ENCODE measurements at regions of chr1 and their contacts with region 1.

Region 1: DNA sequence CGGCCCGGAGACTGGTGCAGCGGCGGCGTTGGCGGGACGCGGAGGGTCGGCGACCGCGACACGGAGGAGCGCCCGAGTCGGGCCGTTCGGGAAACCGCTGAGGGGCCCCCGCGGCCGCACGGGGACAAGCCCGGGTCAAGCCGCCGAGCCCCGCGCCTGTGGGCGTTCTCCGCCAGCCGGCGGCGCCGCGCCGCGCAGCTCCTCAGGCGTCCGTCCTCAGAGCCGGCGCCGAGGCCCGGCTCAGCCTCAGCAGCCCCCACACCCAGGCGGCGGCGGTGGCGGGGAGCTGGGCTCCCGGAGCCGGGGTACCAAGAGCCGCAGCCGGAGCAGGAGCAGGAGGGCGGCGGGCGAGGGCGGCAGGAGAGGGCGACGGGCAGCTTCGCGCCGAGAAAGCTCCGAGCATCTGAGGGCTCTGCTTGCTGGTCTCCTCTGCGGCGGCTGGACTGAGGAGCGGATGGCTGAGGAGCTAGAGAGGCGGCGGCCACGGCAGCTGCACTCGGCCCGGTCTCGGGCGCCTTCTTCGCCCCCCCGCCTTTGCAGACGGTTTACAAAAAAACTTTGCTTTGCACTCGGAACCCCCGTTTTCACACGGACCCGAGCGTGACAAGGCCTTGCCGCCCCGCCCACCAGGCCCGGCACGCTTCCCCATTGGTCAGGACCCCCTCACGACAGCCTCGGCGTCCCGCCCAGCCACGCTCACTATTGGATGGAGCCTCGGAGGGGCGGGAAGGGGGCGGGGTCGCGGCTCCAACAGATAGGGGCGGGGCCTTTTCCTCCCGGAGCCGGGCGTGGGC is at the start of gene SLC30A1:
- DNase-seq: peak; percentile 100
- H3K4me3 Mint-ChIP-seq: peak within 1 kb of the TSS; percentile 90
- H3K27ac Mint-ChIP-seq: peak within 1 kb of the TSS; percentile 80
- H3K4me1 Mint-ChIP-seq: peaks cover 57% of the 10 kb centered on the region
- H3K27me3 Mint-ChIP-seq: peaks cover 5% of the 10 kb centered on the region
- total RNA-seq, gene SLC30A1: 8.0 to 8.2 TPM

Region 2: DNA sequence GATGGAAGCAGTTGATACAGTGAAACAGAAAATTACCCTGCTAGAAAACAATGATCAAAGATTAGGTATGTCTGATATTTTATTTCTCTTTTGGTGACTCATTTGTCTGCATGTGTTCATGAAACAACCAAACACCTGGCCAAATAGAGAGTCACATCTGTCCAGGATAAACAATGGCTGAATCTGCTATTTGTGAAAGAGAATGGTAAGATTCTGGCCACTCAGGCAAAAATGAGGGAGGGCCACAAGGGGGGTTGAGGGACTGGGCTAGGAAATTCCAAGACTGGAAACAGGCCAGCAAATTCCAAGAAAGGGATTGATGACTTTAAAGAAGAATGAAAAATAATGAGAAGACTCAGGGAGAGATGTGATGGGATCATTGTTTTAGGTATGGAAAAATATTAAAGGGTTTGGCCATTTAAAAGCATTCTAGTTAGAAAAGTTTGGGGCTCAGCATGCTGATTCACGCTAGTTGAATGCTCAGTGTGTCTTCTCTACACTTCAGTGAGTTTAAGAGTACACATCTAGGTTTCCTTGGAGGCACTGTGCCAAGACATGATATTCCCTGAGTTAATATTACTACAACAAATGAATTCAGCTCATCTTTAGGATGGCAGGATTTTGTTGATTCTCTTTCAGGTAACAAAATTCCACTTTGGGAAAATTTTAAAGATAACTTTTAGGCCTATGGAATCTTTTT is 207.3 kb before region 1 on chr1:
- CTCF ChIA-PET with region 1: no interaction called
- POLR2A ChIA-PET with region 1: no interaction called
- DNase-seq: no peak
- H3K4me3 Mint-ChIP-seq: no peak overlapping the region
- H3K27ac Mint-ChIP-seq: no peak overlapping the region
- H3K4me1 Mint-ChIP-seq: peaks cover 12% of the 10 kb centered on the region
- H3K27me3 Mint-ChIP-seq: no peaks in the 10 kb centered on the region

Region 3: GRCh38 chr1:211613093-211613947 is 34.5 kb after region 1 on chr1:
- CTCF ChIA-PET with region 1: no interaction called
- POLR2A ChIA-PET with region 1: no interaction called
- DNase-seq: no peak
- H3K4me3 Mint-ChIP-seq: no peak overlapping the region
- H3K27ac Mint-ChIP-seq: no peak overlapping the region
- H3K4me1 Mint-ChIP-seq: peaks cover 8% of the 10 kb centered on the region
- H3K27me3 Mint-ChIP-seq: no peaks in the 10 kb centered on the region

Region 4: GRCh38 chr1:211648980-211649934 is 70.4 kb after region 1 on chr1:
- CTCF ChIA-PET with region 1: interaction called, 17 read pairs
- POLR2A ChIA-PET with region 1: interaction called, 6 read pairs
- DNase-seq: peak; percentile 34
- H3K4me3 Mint-ChIP-seq: no peak overlapping the region
- H3K27ac Mint-ChIP-seq: no peak overlapping the region
- H3K4me1 Mint-ChIP-seq: peaks cover 5% of the 10 kb centered on the region
- H3K27me3 Mint-ChIP-seq: peaks cover 6% of the 10 kb centered on the region

Region 5: GRCh38 chr1:211654838-211655787 is 76.3 kb after region 1 on chr1:
- CTCF ChIA-PET with region 1: interaction called, 17 read pairs
- POLR2A ChIA-PET with region 1: interaction called, 5 read pairs
- DNase-seq: peak; percentile 83
- H3K4me3 Mint-ChIP-seq: no peak overlapping the region
- H3K27ac Mint-ChIP-seq: no peak overlapping the region
- H3K4me1 Mint-ChIP-seq: peaks cover 5% of the 10 kb centered on the region
- H3K27me3 Mint-ChIP-seq: no peaks in the 10 kb centered on the region

Measured in activated CD4-positive, alpha-beta memory T cell treated with anti-CD3 and anti-CD28 coated beads, Interleukin-2, amount 10 ng/mL, durations not matched to agents 7 days and 5 days (primary cell).